CD14-positive monocyte (primary cell): ENCODE measurements at regions of chr18 and their contacts with region 1.

Region 1: DNA sequence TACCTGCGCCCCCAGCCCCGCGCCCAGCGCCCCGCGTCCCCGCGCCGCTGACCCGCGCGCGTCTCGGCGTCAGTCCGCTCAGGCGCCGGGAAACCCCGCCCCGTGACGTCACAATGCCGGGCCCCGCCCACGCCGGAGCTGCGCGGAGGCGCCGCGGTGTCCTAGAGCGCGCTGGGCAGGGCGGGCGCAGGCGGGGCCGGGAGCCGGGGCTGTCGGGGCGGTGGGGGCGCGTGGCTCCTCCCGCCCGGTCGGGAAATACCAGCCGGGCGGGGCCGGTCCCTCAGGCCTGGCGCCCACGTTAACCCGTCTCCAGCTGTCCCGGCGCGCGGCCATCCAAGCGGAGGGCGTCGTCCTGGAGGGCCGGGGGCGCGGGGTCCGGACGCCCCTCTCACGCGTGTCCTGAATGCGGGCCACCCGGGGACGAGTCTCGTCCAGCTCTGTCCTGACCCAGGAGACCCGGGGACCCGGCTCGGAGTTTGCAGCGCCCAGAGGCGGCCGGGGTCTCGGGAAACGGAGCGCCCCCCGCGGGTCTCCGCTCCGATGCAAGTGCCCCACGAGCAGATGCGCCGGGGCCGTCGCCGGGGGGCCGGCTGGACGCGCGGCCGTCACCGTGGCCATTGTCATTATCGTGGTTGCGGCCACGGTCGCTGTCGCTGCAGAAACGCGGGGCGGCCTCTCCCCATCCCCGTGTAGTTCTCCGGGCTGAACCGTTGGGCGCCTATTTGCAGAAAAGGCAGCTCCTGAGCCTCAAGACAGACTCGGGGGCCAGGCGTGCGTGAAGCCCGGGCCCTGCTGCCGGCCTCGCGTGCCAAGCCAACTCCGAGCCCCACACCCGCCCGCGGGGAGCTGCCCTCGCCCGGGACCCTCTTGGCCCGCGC is at the start of gene SLC66A2:
- DNase-seq: peak; percentile 83 to 90 (median 89)
- H3K4me3 ChIP-seq: peak within 1 kb of the TSS; percentile 66 to 98 (median 82)
- H3K4me3 Mint-ChIP-seq: peak within 1 kb of the TSS; percentile 87 to 91
- H3K27ac ChIP-seq: peak within 1 kb of the TSS; percentile 64 to 80
- H3K27ac Mint-ChIP-seq: peak within 1 kb of the TSS; percentile 85 to 94 (median 93)
- H3K4me1 ChIP-seq: peaks cover 29 to 41% of the 10 kb centered on the region in 2 donors
- H3K4me1 Mint-ChIP-seq: peaks cover 39% of the 10 kb centered on the region
- H3K27me3 ChIP-seq: peaks cover 0 to 2% of the 10 kb centered on the region in 2 donors
- H3K27me3 Mint-ChIP-seq: peaks cover 4 to 14% (median 8%) of the 10 kb centered on the region in 3 donors
- CTCF ChIP-seq: no peak
- polyA plus RNA-seq, gene SLC66A2: 26.8 to 42.6 (median 33.8) TPM

Region 2: GRCh38 chr18:79687806-79688205 is 264.0 kb before region 1 on chr18:
- intact Hi-C with region 1: loop called in 1 of 2 experiments (anchors 5 kb)
- DNase-seq: no peak
- H3K4me3 ChIP-seq: no peak overlapping the region
- H3K4me3 Mint-ChIP-seq: no peak overlapping the region
- H3K27ac ChIP-seq: no peak overlapping the region
- H3K27ac Mint-ChIP-seq: no peak overlapping the region
- H3K4me1 ChIP-seq: peaks cover 1 to 27% of the 10 kb centered on the region in 2 donors
- H3K4me1 Mint-ChIP-seq: peaks cover 26% of the 10 kb centered on the region
- H3K27me3 ChIP-seq: no peaks in the 10 kb centered on the region
- H3K27me3 Mint-ChIP-seq: peaks cover 0 to under 1% (median 0%) of the 10 kb centered on the region in 3 donors
- CTCF ChIP-seq: no peak

Region 3: GRCh38 chr18:79790996-79791972 is 160.5 kb before region 1 on chr18:
- intact Hi-C with region 1: loop called in 1 of 2 experiments (anchors 10 kb)
- DNase-seq: peak; percentile 79 to 86 (median 85)
- H3K4me3 ChIP-seq: peak overlapping the region; percentile 7 to 68 (median 9)
- H3K4me3 Mint-ChIP-seq: peak overlapping the region; percentile 75 to 94
- H3K27ac ChIP-seq: peak overlapping the region; percentile 38 to 76
- H3K27ac Mint-ChIP-seq: peak overlapping the region; percentile 67 to 94 (median 88)
- H3K4me1 ChIP-seq: peaks cover 63 to 96% of the 10 kb centered on the region in 2 donors
- H3K4me1 Mint-ChIP-seq: peaks cover 85% of the 10 kb centered on the region
- H3K27me3 ChIP-seq: peaks cover 10 to 38% of the 10 kb centered on the region in 2 donors
- H3K27me3 Mint-ChIP-seq: peaks cover 32 to 51% (median 46%) of the 10 kb centered on the region in 3 donors
- CTCF ChIP-seq: no peak

Region 4: DNA sequence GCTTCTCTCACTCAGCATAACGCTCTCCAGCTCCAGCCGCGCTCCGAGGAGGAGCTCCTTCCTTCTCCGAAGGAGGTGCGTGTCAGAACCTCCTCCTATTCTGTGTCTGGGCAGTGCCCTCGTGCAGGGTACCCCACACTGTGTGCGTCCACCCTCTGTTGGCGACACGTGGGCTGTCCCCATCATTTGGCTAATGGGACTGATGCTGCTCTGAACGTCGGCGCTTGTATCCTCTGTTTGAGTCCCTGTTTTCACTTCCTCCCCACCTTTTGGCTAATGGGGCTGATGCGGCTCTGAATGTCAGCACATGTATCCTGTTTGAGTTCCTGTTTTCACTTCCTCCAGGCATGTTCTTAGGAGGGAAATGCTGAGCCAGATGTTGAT is 131.9 kb before region 1 on chr18:
- intact Hi-C with region 1: loop called in 1 of 2 experiments (anchors 10 kb)
- DNase-seq: peak; percentile 77 to 88 (median 87)
- H3K4me3 ChIP-seq: peak overlapping the region in 1 of 3 experiments; percentile 35
- H3K4me3 Mint-ChIP-seq: peak overlapping the region in 1 of 2 donors; percentile 82
- H3K27ac ChIP-seq: no peak overlapping the region
- H3K27ac Mint-ChIP-seq: peak overlapping the region; percentile 6 to 88 (median 82)
- H3K4me1 ChIP-seq: peaks cover 55 to 70% of the 10 kb centered on the region in 2 donors
- H3K4me1 Mint-ChIP-seq: peaks cover 61% of the 10 kb centered on the region
- H3K27me3 ChIP-seq: no peaks in the 10 kb centered on the region
- H3K27me3 Mint-ChIP-seq: peaks cover 3 to 14% (median 7%) of the 10 kb centered on the region in 3 donors
- CTCF ChIP-seq: no peak

Region 5: GRCh38 chr18:79912409-79912991 is 39.3 kb before region 1 on chr18:
- intact Hi-C with region 1: loop called in 1 of 2 experiments (anchors 5 kb)
- DNase-seq: no peak
- H3K4me3 ChIP-seq: no peak overlapping the region
- H3K4me3 Mint-ChIP-seq: no peak overlapping the region
- H3K27ac ChIP-seq: no peak overlapping the region
- H3K27ac Mint-ChIP-seq: no peak overlapping the region
- H3K4me1 ChIP-seq: no peaks in the 10 kb centered on the region
- H3K4me1 Mint-ChIP-seq: no peaks in the 10 kb centered on the region
- H3K27me3 ChIP-seq: no peaks in the 10 kb centered on the region
- H3K27me3 Mint-ChIP-seq: peaks cover 0 to 1% (median 0%) of the 10 kb centered on the region in 3 donors
- CTCF ChIP-seq: no peak

Region 6: DNA sequence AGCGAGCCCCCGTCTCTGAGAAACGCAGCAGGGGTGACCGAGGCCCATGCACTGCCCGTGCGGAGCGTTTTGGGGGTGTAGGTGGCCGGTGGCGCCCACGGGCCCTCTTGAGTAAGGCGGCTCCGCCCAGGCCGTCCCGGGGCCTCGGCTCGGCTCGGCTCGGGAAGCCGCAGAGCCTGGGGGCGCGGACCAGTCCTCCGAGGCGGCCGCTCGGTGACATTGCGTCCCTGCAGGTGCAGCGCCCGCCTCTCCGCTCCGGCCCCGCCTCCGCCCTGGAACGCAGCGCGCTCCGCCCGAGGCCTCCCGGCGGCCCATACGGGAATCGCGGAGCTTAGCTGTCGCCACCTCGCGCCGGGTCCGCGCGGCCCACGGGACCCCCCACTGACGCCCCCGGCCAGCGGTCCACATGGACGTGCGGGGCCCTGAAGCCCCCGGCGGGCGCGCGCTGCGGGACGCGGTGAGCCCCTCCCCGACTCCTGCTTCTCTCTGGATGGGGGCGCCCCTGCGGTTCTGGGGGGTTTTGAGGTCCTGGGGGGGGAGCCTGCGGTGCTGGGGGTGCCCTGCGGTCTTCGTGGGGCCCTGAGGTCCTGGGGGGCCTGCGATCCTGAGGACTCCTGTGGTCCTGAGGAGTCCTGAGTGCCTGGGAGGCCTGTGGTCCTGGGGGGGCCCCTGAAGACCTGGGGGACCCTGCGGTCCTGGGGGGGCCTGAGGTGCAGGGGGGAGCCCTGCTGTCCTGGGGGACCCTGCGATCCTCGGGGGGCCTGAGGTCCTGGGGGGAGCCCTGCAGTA is 12.7 kb after region 1 on chr18 and contains the start of gene HSBP1L1:
- intact Hi-C with region 1: no loop called
- DNase-seq: peak; percentile 33 to 46 (median 39)
- H3K4me3 ChIP-seq: peak within 1 kb of the TSS; percentile 53 to 85 (median 72)
- H3K4me3 Mint-ChIP-seq: peak within 1 kb of the TSS; percentile 75 to 85
- H3K27ac ChIP-seq: peak within 1 kb of the TSS; percentile 6 to 75
- H3K27ac Mint-ChIP-seq: peak within 1 kb of the TSS in 5 of 7 donors; percentile 30 to 90 (median 86)
- H3K4me1 ChIP-seq: peaks cover 16 to 21% of the 10 kb centered on the region in 2 donors
- H3K4me1 Mint-ChIP-seq: peaks cover 23% of the 10 kb centered on the region
- H3K27me3 ChIP-seq: no peaks in the 10 kb centered on the region
- H3K27me3 Mint-ChIP-seq: peaks cover 6 to 30% (median 20%) of the 10 kb centered on the region in 3 donors
- CTCF ChIP-seq: peak; percentile 36
- polyA plus RNA-seq, gene HSBP1L1: 2.5 to 13.2 (median 10.8) TPM

Region 7: GRCh38 chr18:79988451-79989194 is 36.8 kb after region 1 on chr18 and contains the start of gene TXNL4A:
- intact Hi-C with region 1: loop called (anchors 5 kb)
- DNase-seq: peak; percentile 77 to 88 (median 87)
- H3K4me3 ChIP-seq: peak within 1 kb of the TSS; percentile 61 to 96 (median 79)
- H3K4me3 Mint-ChIP-seq: peak within 1 kb of the TSS; percentile 93 to 98
- H3K27ac ChIP-seq: peak within 1 kb of the TSS; percentile 75 to 95
- H3K27ac Mint-ChIP-seq: peak within 1 kb of the TSS; percentile 92 to 98 (median 97)
- H3K4me1 ChIP-seq: peaks cover 21 to 27% of the 10 kb centered on the region in 2 donors
- H3K4me1 Mint-ChIP-seq: peaks cover 24% of the 10 kb centered on the region
- H3K27me3 ChIP-seq: no peaks in the 10 kb centered on the region
- H3K27me3 Mint-ChIP-seq: peaks cover 0 to 2% (median 0%) of the 10 kb centered on the region in 3 donors
- CTCF ChIP-seq: no peak
- polyA plus RNA-seq, gene TXNL4A: 34.5 to 192 (median 150) TPM